Posterior cingulate gyrus (tissue), 11 donors: ENCODE measurements at regions of chr6 and their contacts with region 1.

Region 1: GRCh38 chr6:13454286-13455221 is 32.8 kb downstream of the GFOD1 start:
- DNase-seq: peak; percentile 67 to 96 (median 82)

Region 2: GRCh38 chr6:12311106-12311505 is 1143.4 kb before region 1 on chr6:
- intact Hi-C with region 1: no loop called
- DNase-seq: no peak

Region 3: DNA sequence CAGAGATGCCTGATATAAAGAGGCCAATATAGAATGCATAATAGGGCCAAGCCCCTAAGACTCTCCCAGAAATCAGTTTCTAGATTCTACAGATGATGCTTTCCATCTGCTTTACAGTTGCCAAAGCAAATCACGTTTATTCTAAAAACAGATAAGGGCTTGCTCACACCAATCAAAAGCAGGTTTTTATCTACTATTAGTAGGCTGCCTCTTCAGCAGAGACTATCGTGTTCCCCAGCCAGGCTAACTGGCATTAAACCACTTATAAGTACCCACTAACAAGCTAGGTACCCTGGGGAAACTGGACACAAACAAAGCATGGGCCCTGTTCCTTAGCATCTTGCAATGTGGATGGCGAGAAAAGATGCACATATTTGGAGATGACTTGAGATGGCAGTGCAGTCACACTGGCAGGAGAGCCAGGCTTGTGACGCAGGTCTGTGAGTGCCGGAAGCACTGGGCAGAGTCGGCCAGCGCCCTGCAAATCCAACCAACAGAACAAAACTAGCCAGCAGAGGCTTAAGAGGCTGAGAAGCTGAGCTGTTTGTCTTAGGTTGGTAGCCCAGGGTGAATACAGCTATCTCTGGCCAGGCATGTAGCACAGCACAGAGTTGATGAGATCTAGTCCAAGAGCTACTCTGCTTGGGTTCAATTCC is 40.5 kb before region 1 on chr6:
- intact Hi-C with region 1: loop called (anchors 5 kb)
- DNase-seq: peak in 9 of 10 donors; percentile 53 to 96 (median 84)

Region 4: GRCh38 chr6:13538084-13538483 is 83.5 kb after region 1 on chr6:
- intact Hi-C with region 1: loop called (anchors 5 kb)
- DNase-seq: no peak

Region 5: GRCh38 chr6:13574149-13574570 is 119.6 kb after region 1 on chr6:
- intact Hi-C with region 1: loop called (anchors 10 kb)
- DNase-seq: peak; percentile 78 to 98 (median 85)

Region 6: GRCh38 chr6:13831615-13832014 is 377.1 kb after region 1 on chr6:
- intact Hi-C with region 1: no loop called
- DNase-seq: no peak